ENCODE measurements at regions of chr9 and their contacts with region 1.

Region 1: DNA sequence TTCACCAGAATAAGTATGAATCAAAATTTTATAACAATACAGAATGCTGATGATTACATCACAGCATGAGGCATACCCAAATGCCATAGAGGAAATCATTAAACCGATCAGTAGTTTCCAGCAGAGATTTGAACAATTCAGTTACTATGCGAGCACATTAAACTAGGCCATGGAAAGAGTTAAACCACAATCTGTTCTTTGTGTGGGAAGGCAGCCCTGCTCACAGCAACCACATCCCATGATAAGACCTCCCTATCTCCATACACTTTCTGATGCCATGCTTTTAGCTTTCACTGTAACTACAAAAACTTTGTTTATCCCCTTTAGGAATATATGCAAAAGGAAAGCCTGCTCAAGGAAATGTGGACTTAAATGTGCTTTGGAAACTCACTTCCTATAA is 4.5 kb downstream of the NFIB start:
- DNase-seq: no peak

Region 2: DNA sequence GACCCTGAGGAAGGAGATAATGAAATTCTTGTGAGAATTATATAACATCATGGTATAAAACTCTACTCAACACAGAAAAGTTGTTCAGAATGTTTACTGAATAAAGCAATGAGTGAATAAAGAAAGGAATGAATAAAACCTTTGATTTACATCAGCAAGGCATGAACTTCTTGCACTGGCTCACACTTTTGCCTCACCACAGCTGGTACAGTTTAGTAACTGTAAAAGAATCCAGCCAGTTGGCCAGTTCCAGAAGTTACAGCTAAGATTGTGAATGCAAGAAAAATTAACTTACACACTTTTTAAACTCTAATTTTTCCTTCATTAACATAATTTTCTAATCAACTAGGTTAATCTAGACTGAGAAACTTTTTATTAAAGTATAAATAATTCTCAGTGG is 486.4 kb before region 1 on chr9:
- intact Hi-C with region 1: no loop called
- DNase-seq: no peak

Region 3: GRCh38 chr9:14119694-14120514 is 189.5 kb before region 1 on chr9:
- intact Hi-C with region 1: loop called in 1 of 2 experiments (anchors 10 kb)
- DNase-seq: no peak

Region 4: GRCh38 chr9:14180093-14180959 is 129.1 kb before region 1 on chr9:
- intact Hi-C with region 1: loop called in 1 of 2 experiments (anchors 10 kb)
- DNase-seq: no peak

Region 5: GRCh38 chr9:14212077-14212476 is 97.3 kb before region 1 on chr9:
- intact Hi-C with region 1: loop called in 1 of 2 experiments (anchors 10 kb)
- DNase-seq: no peak